Activated CD4-positive, alpha-beta T cell treated with anti-CD3 and anti-CD28 coated beads, Interleukin-2, amount 10 ng/mL, durations not matched to agents 24 days and 14 days (primary cell): ENCODE measurements at regions of chr10 and their contacts with region 1.

Region 1: GRCh38 chr10:17409170-17409733 is 45.1 kb downstream of the ST8SIA6 start:
- DNase-seq: peak; percentile 71
- H3K4me3 Mint-ChIP-seq: no peak overlapping the region
- H3K27ac Mint-ChIP-seq: no peak overlapping the region
- H3K4me1 Mint-ChIP-seq: peaks cover 14% of the 10 kb centered on the region
- H3K27me3 Mint-ChIP-seq: peaks cover 12% of the 10 kb centered on the region

Region 2: DNA sequence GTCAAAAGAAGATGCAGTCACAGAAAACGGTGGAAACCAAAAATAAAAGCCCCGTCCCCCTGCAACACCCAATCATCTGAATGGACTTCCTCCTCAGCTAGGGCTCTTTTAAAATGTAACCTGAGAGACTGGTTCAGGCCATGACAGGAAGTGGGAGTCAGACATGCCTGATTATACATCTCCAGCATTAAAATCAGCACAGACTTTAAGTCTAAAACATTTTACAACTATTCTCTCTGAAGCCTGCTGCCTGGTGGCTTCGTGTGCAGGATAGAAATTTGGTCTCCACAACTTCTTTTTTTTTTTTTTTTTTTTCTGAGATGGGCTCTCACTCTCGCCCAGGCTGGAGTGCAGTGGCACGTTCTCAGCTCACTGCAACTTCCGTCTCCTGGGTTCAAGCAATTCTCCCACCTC is 177.6 kb after region 1 on chr10:
- intact Hi-C with region 1: loop called (anchors 10 kb)
- DNase-seq: no peak
- H3K4me3 Mint-ChIP-seq: peak overlapping the region; percentile 24
- H3K27ac Mint-ChIP-seq: no peak overlapping the region
- H3K4me1 Mint-ChIP-seq: peaks cover 11% of the 10 kb centered on the region
- H3K27me3 Mint-ChIP-seq: peaks cover 6% of the 10 kb centered on the region